ENCODE measurements at regions of chr13 and their contacts with region 1.

Region 1: GRCh38 chr13:60427285-60427684 is 30.3 kb downstream of the TDRD3 start:
- DNase-seq: no peak
- ATAC-seq: no peak

Region 2: DNA sequence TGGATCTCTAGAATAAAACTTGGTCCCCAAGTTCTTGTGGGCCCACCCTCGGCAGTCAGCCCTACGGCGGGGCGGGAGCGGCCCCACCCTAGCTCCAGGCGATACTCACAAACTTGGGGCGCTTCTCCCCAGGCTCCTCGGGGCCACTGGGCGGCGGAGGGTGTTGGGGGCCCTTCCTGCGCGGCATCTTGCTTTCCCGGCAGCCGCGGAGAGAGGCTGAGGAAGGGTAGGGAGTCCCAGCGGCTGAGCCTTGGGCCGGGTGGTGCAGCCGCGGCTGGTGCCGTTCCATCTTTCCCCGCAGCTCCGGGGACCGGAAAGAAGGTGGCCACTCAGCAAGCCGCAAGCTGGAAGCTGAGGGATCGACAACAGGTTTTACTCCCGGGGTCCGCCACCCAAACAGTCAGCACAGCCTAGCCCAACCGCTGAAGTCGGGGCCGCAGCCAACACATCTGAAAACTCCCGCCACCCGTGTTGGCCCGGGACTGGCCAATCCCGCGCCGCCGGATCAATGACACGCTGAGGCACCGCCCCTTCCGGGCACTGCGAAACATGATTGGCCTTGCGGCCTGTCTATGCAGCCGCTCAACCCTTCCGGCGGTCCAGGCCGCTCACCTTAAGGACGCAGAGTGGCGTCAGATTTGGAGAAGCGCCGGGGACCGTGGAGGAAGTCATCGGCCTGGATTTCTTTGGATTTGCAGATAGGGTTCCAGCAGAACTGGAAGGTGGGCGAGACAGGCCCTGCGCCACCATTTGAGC is 263.6 kb before region 1 on chr13 and contains the start of gene DIAPH3:
- intact Hi-C with region 1: loop called (anchors 10 kb)
- DNase-seq: peak; percentile 98
- ATAC-seq: peak; percentile 100
- total RNA-seq, gene DIAPH3: 0.32 TPM

Region 3: DNA sequence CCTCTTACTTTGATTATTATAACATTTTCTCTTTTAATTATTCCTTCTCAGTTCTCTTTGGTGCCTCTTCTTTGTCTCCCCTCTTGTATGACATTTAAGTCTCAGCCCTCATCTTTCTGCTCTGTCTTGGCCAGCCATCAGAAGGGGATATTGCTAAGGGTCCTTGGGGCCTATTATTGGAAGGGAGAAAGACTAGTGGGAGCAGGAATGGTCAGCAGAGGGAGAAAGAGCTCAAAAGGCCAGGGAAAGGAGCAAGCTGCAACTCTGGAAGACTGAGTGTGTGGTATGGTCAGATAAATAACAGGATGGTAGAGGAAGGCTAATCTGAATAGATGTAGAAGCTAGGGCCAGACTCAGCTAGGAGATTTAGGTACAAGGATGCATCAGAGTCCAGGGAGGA is 306.6 kb after region 1 on chr13:
- intact Hi-C with region 1: no loop called
- DNase-seq: no peak
- ATAC-seq: no peak

Region 4: DNA sequence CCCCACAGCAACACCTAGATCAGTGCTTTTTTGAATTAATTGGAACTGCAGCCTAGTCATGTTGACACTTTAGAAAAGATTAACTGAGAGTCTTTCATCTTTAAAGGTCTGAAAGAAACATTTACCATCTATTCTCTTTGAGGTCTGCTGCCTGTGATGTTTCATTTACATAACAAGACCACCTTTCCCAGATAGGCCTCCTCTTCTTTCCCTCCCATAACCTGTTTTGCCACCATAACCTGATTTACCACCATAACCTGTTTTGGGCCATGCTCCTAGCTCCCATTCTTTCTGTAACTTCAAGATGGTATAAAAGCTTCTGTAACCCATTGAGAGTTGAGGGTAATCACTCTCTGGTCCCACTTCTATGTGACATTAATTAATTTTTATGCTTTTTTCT is 667.6 kb after region 1 on chr13:
- intact Hi-C with region 1: no loop called
- DNase-seq: no peak
- ATAC-seq: no peak